Activated CD4-positive, alpha-beta memory T cell treated with anti-CD3 and anti-CD28 coated beads for 36 hours (primary cell): ENCODE measurements at regions of chr1 and their contacts with region 1.

Region 1: DNA sequence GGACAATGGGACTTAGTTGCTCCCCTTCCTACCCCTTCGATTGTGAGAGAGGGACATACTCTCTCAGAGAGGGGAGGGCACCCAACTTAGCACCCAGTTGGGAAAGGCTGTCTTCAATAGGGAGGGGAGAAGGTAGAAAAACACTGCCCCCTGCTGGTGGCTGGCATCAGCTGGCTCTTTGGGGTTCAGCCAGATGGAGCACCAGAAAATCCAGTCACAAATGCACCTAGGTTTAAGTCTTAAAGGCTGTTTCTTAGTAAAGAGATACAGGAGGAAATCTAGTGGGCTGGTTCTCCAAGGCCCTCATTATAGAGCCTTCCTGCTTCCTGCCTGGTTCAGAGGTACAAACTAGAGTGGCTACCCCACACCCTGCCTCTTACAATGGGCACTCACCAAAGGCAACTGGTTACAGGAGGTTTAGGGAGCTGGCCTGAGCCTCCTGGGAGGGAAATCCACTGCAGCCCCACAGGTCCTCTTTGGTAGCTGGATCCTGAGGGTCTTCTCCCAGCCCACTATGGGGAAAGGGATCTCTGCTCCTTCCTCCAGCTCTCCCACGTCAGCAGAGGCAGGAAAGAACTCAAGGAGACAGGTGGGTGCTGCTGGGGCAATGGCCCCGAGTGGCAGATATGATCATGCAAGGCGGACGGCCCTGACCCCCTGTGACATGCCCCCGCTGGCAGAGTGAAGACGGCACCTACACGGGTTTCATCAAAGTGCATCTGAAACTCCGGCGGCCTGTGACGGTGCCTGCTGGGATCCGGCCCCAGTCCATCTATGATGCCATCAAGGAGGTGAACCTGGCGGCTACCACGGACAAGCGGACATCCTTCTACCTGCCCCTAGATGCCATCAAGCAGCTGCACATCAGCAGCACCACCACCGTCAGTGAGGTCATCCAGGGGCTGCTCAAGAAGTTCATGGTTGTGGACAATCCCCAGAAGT is 28.3 kb downstream of the EIF2D start:
- DNase-seq: peak; percentile 91
- H3K4me3 Mint-ChIP-seq: peak overlapping the region; percentile 73
- H3K27ac Mint-ChIP-seq: peak overlapping the region; percentile 99
- H3K4me1 Mint-ChIP-seq: peaks cover 94% of the 10 kb centered on the region
- H3K27me3 Mint-ChIP-seq: no peaks in the 10 kb centered on the region

Region 2: GRCh38 chr1:206469933-206470691 is 113.9 kb before region 1 on chr1 and contains the start of gene IKBKE:
- CTCF ChIA-PET with region 1: interaction called, 16 read pairs
- POLR2A ChIA-PET with region 1: interaction called, 3 read pairs
- intact Hi-C with region 1: loop called (anchors 5 kb)
- DNase-seq: peak; percentile 74
- H3K4me3 Mint-ChIP-seq: peak within 1 kb of the TSS; percentile 85
- H3K27ac Mint-ChIP-seq: peak within 1 kb of the TSS; percentile 90
- H3K4me1 Mint-ChIP-seq: peaks cover 87% of the 10 kb centered on the region
- H3K27me3 Mint-ChIP-seq: no peaks in the 10 kb centered on the region
- total RNA-seq, gene IKBKE: 18.4 to 19.4 TPM

Region 3: GRCh38 chr1:206489980-206490770 is 93.8 kb before region 1 on chr1:
- CTCF ChIA-PET with region 1: interaction called, 123 read pairs
- POLR2A ChIA-PET with region 1: no interaction called
- intact Hi-C with region 1: loop called (anchors 1 kb)
- DNase-seq: peak; percentile 84
- H3K4me3 Mint-ChIP-seq: no peak overlapping the region
- H3K27ac Mint-ChIP-seq: no peak overlapping the region
- H3K4me1 Mint-ChIP-seq: no peaks in the 10 kb centered on the region
- H3K27me3 Mint-ChIP-seq: no peaks in the 10 kb centered on the region

Region 4: GRCh38 chr1:206544562-206545257 is 39.3 kb before region 1 on chr1:
- CTCF ChIA-PET with region 1: interaction called, 588 read pairs
- POLR2A ChIA-PET with region 1: interaction called, 15 read pairs
- intact Hi-C with region 1: loop called (anchors 1 kb)
- DNase-seq: peak; percentile 88
- H3K4me3 Mint-ChIP-seq: no peak overlapping the region
- H3K27ac Mint-ChIP-seq: peak overlapping the region; percentile 42
- H3K4me1 Mint-ChIP-seq: peaks cover 17% of the 10 kb centered on the region
- H3K27me3 Mint-ChIP-seq: no peaks in the 10 kb centered on the region

Region 5: DNA sequence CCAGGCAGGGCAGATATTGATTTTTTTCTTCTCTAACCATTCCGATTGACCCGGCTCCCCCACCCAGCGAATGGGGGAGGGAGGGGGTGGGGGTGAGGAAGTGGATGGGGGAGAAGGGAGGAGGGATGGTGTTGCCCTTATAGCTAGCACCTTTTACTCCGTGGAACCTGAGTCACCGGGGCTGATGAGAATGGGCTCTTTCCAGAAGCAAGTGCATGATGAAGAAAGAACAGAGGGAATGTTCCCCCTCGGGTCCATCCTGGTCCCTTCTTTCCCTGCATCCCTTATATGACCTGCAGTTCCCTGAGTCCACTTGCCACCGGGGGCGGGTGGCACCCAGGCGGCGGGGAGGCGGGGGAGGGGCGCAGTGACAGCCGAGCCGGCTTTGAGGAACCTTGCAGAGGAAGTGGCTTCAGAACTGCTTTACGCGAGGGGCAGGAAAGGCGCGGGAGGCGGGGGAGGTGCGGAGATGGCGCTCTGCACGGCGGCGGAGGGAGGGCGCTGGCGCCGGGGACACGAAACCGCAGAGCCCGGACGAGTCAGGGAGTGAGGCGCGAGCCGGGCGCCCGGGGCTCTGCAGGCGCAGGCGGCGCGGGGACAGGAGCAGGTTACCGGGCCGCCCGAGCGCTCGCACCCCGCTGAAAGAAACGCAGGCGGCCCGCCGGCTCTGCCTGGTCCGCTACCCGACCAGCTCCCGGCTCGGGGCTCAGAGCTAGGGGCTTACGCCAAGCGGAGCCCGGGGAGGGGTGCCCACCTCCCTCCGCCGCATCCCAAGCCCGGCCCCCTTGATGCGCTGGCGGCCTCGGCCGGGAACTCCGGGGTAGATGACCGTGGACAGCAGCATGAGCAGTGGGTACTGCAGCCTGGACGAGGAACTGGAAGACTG is 27.0 kb before region 1 on chr1:
- CTCF ChIA-PET with region 1: interaction called, 588 read pairs
- POLR2A ChIA-PET with region 1: interaction called, 546 read pairs
- intact Hi-C with region 1: loop called (anchors 1 kb)
- DNase-seq: peak; percentile 94
- H3K4me3 Mint-ChIP-seq: peak overlapping the region; percentile 97
- H3K27ac Mint-ChIP-seq: peak overlapping the region; percentile 99
- H3K4me1 Mint-ChIP-seq: peaks cover 66% of the 10 kb centered on the region
- H3K27me3 Mint-ChIP-seq: no peaks in the 10 kb centered on the region

Region 6: DNA sequence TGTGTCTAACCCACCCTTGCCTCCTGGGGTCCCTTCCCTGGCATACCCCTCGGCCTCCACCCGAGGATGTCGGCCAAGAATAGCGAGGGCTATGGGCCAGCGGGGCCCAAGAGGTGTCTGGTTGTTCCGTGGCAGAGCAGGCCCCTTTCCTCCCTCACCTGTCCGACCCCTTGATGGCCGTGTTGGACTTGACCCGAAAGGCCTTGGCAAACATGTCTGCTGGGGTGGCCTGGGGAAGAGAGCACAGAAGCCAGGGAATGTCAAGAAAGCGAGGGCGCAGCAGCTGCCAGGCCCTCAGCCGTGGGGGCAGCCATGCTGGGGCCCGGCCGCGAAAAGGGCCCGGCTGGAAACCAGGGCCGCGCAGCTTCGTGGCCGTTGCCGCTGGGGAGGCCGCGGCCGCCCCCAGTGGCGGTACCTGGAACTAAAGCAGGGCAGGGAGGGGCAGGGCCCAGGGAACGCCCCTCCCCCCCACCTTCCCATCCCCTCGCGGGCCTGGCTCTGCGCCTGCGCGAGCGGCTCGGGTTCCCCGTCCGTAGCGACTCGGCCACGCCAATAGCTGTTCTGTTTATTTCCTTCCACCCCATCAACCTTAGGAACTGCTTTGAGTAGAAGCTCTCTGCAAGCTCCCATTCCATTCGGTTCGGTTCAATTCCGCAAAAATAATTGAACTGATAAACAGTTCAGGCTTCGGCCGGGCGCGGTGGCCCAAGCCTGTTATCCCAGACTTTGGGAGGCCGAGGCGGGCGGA is 28.3 kb after region 1 on chr1 and contains the start of gene EIF2D:
- CTCF ChIA-PET with region 1: interaction called, 5 read pairs
- POLR2A ChIA-PET with region 1: interaction called, 8 read pairs
- intact Hi-C with region 1: loop called (anchors 1 kb)
- DNase-seq: peak; percentile 96
- H3K4me3 Mint-ChIP-seq: peak within 1 kb of the TSS; percentile 96
- H3K27ac Mint-ChIP-seq: peak within 1 kb of the TSS; percentile 90
- H3K4me1 Mint-ChIP-seq: peaks cover 32% of the 10 kb centered on the region
- H3K27me3 Mint-ChIP-seq: no peaks in the 10 kb centered on the region
- total RNA-seq, gene EIF2D: 84.6 to 87.5 TPM